Psoas muscle (tissue), 8 donors: ENCODE measurements at regions of chr12 and their contacts with region 1.

Region 1: DNA sequence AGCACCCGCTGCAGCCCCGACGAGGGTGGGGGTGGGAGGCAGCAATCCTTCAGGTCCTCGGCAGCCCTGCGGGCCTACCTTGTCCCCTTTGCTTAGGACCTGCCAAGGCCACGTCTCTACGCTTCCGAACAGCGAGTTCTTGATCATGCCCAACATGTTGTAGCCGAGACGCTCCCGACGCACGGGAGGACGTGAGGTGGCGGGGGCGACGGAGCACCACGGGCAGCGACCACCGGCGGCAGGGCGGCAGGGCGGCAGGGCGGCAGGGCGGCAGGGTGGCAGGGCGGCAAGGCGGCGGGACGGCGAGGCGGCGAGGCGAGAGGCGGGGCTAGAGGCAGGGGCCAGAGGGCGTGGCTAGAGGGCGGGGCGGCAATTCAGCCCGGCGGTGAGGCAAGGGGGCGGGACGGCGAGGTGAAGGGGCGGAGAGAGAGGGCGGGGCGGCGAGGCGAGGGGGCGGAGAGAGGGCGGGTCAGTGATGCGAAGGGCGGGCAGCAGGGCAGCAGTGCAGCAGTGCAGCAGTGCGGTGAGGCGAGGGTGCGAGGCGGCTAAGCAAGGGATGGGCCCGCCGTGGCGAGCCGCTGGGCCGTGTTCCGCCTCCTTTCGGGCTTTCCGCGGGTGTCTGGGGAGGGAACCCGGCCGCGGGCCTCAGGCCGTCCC is at the start of gene HEBP1:
- DNase-seq: peak; percentile 95 to 98
- ATAC-seq: peak; percentile 98 to 99 (median 98)
- H3K4me3 ChIP-seq: peak within 1 kb of the TSS; percentile 92
- H3K27ac ChIP-seq: peak within 1 kb of the TSS; percentile 86
- H3K4me1 ChIP-seq: peaks cover 15% of the 10 kb centered on the region
- H3K27me3 ChIP-seq: no peaks in the 10 kb centered on the region
- CTCF ChIP-seq: no peak
- total RNA-seq, gene HEBP1: 27.0 to 39.3 (median 35.5) TPM

Region 2: GRCh38 chr12:12138203-12139154 is 861.6 kb before region 1 on chr12:
- intact Hi-C with region 1: no loop called
- DNase-seq: no peak
- ATAC-seq: no peak
- H3K4me3 ChIP-seq: no peak overlapping the region
- H3K27ac ChIP-seq: no peak overlapping the region
- H3K4me1 ChIP-seq: no peaks in the 10 kb centered on the region
- H3K27me3 ChIP-seq: no peaks in the 10 kb centered on the region
- CTCF ChIP-seq: no peak

Region 3: DNA sequence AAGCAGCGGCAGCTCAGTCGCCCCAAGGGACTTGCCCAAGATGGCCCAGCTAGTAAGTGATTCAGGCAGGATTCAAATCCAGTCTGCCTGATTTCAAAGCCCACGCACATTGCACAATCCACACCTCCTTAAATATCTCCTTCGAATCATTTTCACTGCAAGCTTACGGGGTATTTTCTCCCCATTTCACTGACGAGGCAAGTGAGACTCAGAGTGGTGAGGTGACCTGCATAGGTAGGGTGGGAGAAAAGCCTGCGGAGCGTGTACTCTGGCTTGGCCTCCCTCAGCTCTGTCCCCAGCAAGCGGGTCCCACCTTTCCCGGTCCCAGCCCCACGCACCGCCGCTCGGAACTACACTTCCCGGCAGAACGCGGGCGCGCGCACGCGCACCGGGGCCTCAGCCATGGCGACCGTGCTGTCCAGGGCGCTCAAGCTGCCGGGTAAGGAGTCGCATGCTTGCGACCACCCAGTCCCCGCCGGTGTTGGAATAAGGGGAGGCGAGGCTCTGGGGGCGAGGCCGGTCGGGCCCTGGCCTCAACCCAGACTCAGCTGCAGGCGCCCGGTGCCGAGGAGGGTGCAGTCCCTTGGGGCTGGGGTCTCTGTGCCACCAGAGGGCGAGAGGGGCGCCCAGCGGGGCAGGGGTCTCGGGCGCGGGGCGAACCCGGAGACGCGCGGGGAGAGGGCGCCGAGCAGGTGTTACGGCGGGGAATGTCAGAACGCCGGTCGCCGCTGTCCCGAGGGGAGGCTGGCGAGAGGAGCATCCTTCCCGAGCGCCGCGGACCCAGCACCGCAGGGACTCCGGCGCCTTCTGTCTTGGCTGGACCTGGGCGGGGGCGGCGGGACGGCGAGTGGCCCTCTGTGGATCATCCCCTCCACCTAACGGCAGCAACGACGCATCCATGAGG is 44.2 kb after region 1 on chr12 and contains the start of gene FAM234B:
- intact Hi-C with region 1: loop called (anchors 5 kb)
- DNase-seq: peak; percentile 87 to 90
- ATAC-seq: peak; percentile 94 to 100 (median 98)
- H3K4me3 ChIP-seq: peak within 1 kb of the TSS; percentile 100
- H3K27ac ChIP-seq: peak within 1 kb of the TSS; percentile 72
- H3K4me1 ChIP-seq: peaks cover 3% of the 10 kb centered on the region
- H3K27me3 ChIP-seq: no peaks in the 10 kb centered on the region
- CTCF ChIP-seq: peak; percentile 15
- total RNA-seq, gene FAM234B: 2.1 to 4.0 (median 2.5) TPM

Region 4: GRCh38 chr12:13100882-13101769 is 101.0 kb after region 1 on chr12:
- intact Hi-C with region 1: loop called in 1 of 2 experiments (anchors 5 kb)
- DNase-seq: peak; percentile 95
- ATAC-seq: peak; percentile 80 to 88 (median 84)
- H3K4me3 ChIP-seq: peak overlapping the region; percentile 70
- H3K27ac ChIP-seq: peak overlapping the region; percentile 85
- H3K4me1 ChIP-seq: peaks cover 6% of the 10 kb centered on the region
- H3K27me3 ChIP-seq: no peaks in the 10 kb centered on the region
- CTCF ChIP-seq: no peak